Endothelial cell of umbilical vein (primary cell): ENCODE measurements at regions of chr15 and their contacts with region 1.

Region 1: DNA sequence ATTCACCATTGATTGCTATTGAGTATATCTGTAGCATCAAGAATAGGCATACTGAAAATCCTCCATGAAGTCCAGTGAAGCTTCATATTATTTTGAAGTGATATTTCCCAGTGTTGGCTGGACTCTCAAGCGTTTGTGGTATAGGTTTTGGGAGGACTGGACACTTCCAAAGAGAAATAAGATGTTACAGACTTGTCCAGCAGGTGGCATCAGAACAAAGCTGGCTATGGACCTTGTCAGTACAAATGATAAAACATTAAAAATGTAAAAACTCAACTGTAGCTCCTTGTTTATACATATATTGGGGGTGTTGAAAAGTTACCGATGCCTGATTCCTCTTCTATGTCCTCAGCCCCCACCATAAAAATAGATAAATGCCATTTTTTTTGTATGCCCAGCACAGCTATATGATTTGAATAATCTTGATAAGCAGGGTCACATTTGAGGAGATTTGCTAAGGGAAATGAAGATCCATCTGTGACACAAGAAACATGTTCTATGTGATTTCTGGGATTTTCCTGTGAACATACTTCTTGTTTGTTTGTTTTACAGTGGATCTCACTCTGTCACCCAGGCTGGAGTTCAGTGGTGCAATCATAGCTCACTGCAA is 54.5 kb upstream of the GOLGA6B start:
- DNase-seq: peak; percentile 56
- H3K4me3 ChIP-seq: no peak overlapping the region
- H3K27ac ChIP-seq: no peak overlapping the region
- H3K4me1 ChIP-seq: no peaks in the 10 kb centered on the region
- H3K27me3 ChIP-seq: no peaks in the 10 kb centered on the region
- CTCF ChIP-seq: peak; percentile 45 to 58
- POLR2A ChIP-seq: no peak

Region 2: GRCh38 chr15:72585476-72586082 is 14.4 kb before region 1 on chr15:
- CTCF ChIA-PET with region 1: interaction called, 39 read pairs
- POLR2A ChIA-PET with region 1: no interaction called
- dilution Hi-C with region 1: no loop called
- intact Hi-C with region 1: no loop called
- DNase-seq: peak; percentile 15
- H3K4me3 ChIP-seq: no peak overlapping the region
- H3K27ac ChIP-seq: no peak overlapping the region
- H3K4me1 ChIP-seq: no peaks in the 10 kb centered on the region
- H3K27me3 ChIP-seq: no peaks in the 10 kb centered on the region
- CTCF ChIP-seq: no peak
- POLR2A ChIP-seq: no peak

Region 3: GRCh38 chr15:72671535-72671934 is 71.6 kb after region 1 on chr15:
- CTCF ChIA-PET with region 1: interaction called, 35 read pairs
- POLR2A ChIA-PET with region 1: no interaction called
- dilution Hi-C with region 1: no loop called
- intact Hi-C with region 1: no loop called
- DNase-seq: no peak
- H3K4me3 ChIP-seq: no peak overlapping the region
- H3K27ac ChIP-seq: no peak overlapping the region
- H3K4me1 ChIP-seq: no peaks in the 10 kb centered on the region
- H3K27me3 ChIP-seq: peaks cover 2 to 14% of the 10 kb centered on the region in 2 experiments
- CTCF ChIP-seq: no peak
- POLR2A ChIP-seq: no peak

Region 4: GRCh38 chr15:72685925-72686794 is 86.2 kb after region 1 on chr15 and contains the starts of genes BBS4 and HIGD2B:
- CTCF ChIA-PET with region 1: interaction called, 11 read pairs
- POLR2A ChIA-PET with region 1: interaction called, 4 read pairs
- dilution Hi-C with region 1: no loop called
- intact Hi-C with region 1: loop called (anchors 5 kb)
- DNase-seq: peak; percentile 87
- H3K4me3 ChIP-seq: peak within 1 kb of the TSS; percentile 54 to 79 (median 72)
- H3K27ac ChIP-seq: peak within 1 kb of the TSS; percentile 67
- H3K4me1 ChIP-seq: peaks cover 9% of the 10 kb centered on the region
- H3K27me3 ChIP-seq: no peaks in the 10 kb centered on the region
- CTCF ChIP-seq: no peak
- POLR2A ChIP-seq: peak; percentile 62
- total RNA-seq, gene BBS4: 7.5 and 11.3 TPM in 2 replicates
- total RNA-seq, gene HIGD2B: not detected in 2 replicates

Region 5: GRCh38 chr15:72783563-72784237 is 183.7 kb after region 1 on chr15 and contains the start of gene ADPGK:
- CTCF ChIA-PET with region 1: interaction called, 3 read pairs
- POLR2A ChIA-PET with region 1: no interaction called
- dilution Hi-C with region 1: no loop called
- intact Hi-C with region 1: loop called (anchors 1 kb)
- DNase-seq: peak; percentile 94
- H3K4me3 ChIP-seq: peak within 1 kb of the TSS; percentile 49 to 91 (median 61)
- H3K27ac ChIP-seq: peak within 1 kb of the TSS; percentile 61
- H3K4me1 ChIP-seq: peaks cover 10% of the 10 kb centered on the region
- H3K27me3 ChIP-seq: peaks cover 14 to 18% of the 10 kb centered on the region in 2 experiments
- CTCF ChIP-seq: no peak
- POLR2A ChIP-seq: peak; percentile 92
- total RNA-seq, gene ADPGK: 51.0 and 51.7 TPM in 2 replicates

Region 6: DNA sequence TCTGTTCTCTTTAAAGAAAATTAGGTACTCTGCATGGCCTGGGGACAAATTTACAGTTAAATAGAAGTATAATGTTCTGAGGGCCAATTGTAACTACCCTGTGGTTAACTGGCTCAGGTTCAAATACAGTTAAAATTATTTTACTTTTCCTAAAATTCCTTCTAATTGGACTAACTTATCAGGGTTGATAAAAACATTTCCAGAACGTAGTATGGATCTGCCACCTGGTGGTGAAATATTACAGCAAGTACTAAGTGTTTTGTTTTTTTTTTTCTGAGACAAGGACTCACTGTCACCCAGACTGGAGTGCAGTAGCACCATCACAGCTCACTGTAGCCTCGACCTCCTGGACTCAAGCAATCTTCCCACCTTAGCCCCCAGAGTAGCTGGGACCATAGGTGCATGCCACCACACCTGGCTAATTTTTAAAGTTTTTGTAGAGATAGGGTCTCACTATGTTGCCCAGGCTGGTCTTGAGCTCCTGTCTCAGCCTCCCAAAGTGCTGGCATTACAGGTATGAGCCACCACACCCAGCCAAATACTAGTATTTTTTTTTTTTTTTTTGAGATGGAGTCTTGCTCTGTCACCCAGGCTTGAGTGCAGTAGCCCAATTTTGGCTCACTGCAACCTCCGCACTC is 481.5 kb after region 1 on chr15:
- CTCF ChIA-PET with region 1: interaction called, 49 read pairs
- POLR2A ChIA-PET with region 1: no interaction called
- dilution Hi-C with region 1: no loop called
- intact Hi-C with region 1: loop called (anchors 2 kb)
- DNase-seq: peak; percentile 65
- H3K4me3 ChIP-seq: no peak overlapping the region
- H3K27ac ChIP-seq: no peak overlapping the region
- H3K4me1 ChIP-seq: no peaks in the 10 kb centered on the region
- H3K27me3 ChIP-seq: peaks cover 49 to 77% of the 10 kb centered on the region in 2 experiments
- CTCF ChIP-seq: peak; percentile 21 to 44
- POLR2A ChIP-seq: no peak

Region 7: DNA sequence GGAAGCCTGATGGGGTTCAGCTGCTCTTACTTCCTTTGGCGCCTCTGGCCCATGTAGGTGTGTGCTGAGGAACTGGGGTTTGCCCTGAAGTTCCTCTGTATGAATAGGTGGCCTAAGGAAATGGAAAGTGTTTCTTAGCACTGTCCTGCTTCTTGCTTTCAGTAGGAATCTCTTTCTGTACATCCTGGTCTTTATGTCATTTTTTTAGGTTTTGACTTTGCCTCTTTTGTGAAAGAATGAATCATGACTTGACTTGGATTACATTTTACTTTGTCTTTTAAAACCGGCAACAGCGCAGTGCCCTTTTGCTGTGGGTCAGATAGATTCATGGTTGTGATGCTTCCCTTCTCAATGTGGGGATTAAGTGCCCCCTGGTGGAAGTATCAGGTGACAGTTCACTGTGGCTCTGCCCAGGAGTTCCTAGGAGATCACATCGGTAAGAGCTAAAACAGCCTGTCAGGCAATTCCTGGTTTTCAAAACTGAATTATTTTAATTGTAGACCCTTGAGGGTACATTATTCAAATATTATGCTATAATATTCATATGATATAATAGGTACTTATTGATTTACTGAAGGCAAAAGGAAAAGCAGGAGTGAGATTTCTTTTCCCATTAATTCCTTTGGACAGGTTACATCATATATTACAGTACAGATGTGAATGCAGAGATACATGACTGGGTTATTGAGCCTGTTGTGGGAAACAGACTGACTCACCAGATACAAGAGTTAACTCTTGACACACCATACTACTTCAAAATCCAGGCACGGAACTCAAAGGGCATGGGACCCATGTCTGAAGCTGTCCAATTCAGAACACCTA is 673.4 kb after region 1 on chr15:
- CTCF ChIA-PET with region 1: interaction called, 7 read pairs
- POLR2A ChIA-PET with region 1: no interaction called
- dilution Hi-C with region 1: no loop called
- intact Hi-C with region 1: loop called (anchors 10 kb)
- DNase-seq: peak; percentile 58
- H3K4me3 ChIP-seq: no peak overlapping the region
- H3K27ac ChIP-seq: no peak overlapping the region
- H3K4me1 ChIP-seq: no peaks in the 10 kb centered on the region
- H3K27me3 ChIP-seq: peaks cover 2 to 12% of the 10 kb centered on the region in 2 experiments
- CTCF ChIP-seq: peak; percentile 63 to 65
- POLR2A ChIP-seq: no peak

Region 8: GRCh38 chr15:73426323-73426994 is 826.5 kb after region 1 on chr15:
- CTCF ChIA-PET with region 1: no interaction called
- POLR2A ChIA-PET with region 1: no interaction called
- dilution Hi-C with region 1: no loop called
- intact Hi-C with region 1: no loop called
- DNase-seq: no peak
- H3K4me3 ChIP-seq: no peak overlapping the region
- H3K27ac ChIP-seq: no peak overlapping the region
- H3K4me1 ChIP-seq: no peaks in the 10 kb centered on the region
- H3K27me3 ChIP-seq: peaks cover 0 to 2% of the 10 kb centered on the region in 2 experiments
- CTCF ChIP-seq: no peak
- POLR2A ChIP-seq: no peak